ENCODE measurements at regions of chr13 and their contacts with region 1.

Region 1: DNA sequence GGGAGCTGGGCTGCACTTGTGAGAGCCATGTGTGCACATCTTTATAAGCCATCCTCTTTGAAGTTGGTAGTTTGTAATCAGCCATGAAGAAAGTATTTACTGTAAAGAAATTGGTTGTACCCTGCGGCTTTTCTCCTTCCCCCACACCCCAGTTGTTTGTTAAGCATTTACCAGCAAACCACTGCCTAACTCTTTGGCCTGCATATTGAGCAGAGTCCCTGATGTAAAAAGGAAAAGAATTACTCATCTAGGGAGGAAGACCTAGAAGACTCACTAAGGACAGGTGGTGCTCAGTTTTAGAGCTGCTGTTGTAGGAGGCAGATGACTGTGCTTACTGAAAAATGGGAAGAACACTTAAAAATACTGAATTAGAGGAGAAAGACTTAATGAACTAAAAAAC is 245.3 kb downstream of the PCCA start:
- DNase-seq: no peak
- ATAC-seq: no peak
- H3K4me3 ChIP-seq: no peak overlapping the region
- H3K27ac ChIP-seq: no peak overlapping the region
- H3K4me1 ChIP-seq: no peaks in the 10 kb centered on the region
- H3K27me3 ChIP-seq: no peaks in the 10 kb centered on the region
- CTCF ChIP-seq: no peak

Region 2: DNA sequence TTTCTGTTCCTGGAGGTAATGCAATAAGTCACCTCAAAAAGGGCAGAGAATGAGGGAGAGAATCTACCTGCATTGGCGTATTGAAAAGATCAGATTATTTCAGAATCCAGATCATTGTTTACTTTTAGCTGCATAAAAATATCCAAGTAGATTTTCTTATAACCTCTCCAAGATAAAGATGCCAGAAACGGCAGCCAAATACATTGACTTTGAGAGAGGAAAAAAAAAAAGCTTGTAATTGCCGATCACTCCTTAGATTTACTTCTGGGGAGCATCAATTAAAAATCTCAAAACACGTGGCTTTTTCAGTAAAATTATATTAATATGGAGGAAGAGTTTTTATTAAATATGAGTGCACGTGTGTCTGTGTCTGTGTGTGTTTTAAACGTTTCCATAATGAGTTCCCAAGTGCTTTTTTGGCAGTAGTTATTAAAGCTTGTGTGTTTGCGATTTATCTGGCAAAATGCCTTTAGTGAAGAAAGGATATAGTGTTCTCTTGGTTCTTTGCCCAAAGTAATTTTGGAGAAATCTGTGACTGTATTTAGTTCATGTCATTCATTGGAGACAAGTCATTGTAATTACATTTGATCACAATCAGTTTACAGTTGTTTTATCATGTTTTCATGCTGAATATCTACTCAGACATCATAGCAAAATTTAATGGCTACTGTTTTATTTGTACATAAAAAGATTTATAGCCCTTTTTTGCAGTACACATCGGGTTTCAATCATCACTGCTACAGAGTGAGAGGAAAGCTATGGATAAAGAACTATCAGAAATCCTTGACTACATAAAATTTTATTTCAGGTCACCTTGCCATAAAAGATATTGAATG is 656.9 kb before region 1 on chr13:
- CTCF ChIA-PET with region 1: interaction called, 14 read pairs
- POLR2A ChIA-PET with region 1: no interaction called
- intact Hi-C with region 1: no loop called
- DNase-seq: peak; percentile 47
- ATAC-seq: peak; percentile 42
- H3K4me3 ChIP-seq: no peak overlapping the region
- H3K27ac ChIP-seq: no peak overlapping the region
- H3K4me1 ChIP-seq: 0 out of 2 replicates have a peak, but pooled peaks cover 3% of the 10 kb centered on the region
- H3K27me3 ChIP-seq: no peaks in the 10 kb centered on the region
- CTCF ChIP-seq: no peak

Measured in PC-3 (cell line).